OCI-LY7 (cell line): ENCODE measurements at regions of chr3 and their contacts with region 1.

Region 1: GRCh38 chr3:33047842-33048834 is 48.8 kb downstream of the GLB1 start:
- DNase-seq: peak; percentile 87
- H3K4me3 ChIP-seq: peak overlapping the region; percentile 48
- H3K27ac ChIP-seq: peak overlapping the region; percentile 90
- H3K4me1 ChIP-seq: peaks cover 88% of the 10 kb centered on the region
- CTCF ChIP-seq: no peak

Region 2: DNA sequence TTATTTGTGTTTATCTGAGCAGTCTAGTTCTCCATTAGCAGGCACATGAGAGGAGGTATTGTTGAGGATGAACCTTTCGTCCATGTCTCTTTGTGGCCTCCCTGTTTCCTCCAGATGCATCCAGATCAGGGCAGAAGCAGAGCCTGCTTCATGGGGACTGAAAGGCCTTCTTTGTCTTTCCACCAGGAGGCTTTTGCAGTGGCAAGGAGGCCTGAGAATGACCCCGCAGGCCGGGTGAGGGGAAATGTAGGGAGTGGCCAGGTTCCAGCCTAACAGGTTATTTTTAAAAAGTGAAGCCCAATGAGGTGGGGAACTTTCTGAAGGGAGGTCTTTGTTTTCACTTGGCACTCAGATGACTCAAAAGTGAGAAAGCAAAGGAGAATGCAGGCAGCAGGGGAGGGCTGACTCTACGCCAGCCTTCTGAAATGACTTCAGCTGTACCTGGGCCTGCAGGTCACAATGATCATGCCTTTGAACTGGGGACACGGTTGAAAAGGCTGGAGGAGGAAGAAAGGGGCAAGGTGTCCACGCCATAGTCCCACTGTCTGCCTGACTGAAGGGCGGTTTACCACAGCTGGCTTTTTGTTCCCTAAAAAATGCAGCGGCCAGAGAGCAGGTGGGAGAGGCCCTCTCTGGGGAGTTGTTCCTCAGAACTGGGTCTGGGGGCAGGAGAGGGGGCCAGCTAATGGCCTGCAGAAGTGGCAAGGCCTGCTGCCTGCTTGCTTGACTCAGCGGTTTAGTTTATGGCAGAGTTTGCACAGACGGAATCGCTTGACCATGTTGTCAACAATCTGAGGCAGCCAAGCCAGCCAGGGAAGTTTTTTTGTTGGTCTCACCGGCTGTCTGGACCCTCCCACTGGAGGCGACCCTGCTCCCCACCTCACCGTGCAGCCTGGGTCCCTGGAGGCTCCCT is 627.8 kb before region 1 on chr3:
- CTCF ChIA-PET with region 1: no interaction called
- POLR2A ChIA-PET with region 1: no interaction called
- intact Hi-C with region 1: loop called (anchors 5 kb)
- DNase-seq: peak; percentile 74
- H3K4me3 ChIP-seq: peak overlapping the region; percentile 47
- H3K27ac ChIP-seq: peak overlapping the region; percentile 90
- H3K4me1 ChIP-seq: peaks cover 78% of the 10 kb centered on the region
- CTCF ChIP-seq: no peak

Region 3: GRCh38 chr3:32614956-32615355 is 433.2 kb before region 1 on chr3:
- CTCF ChIA-PET with region 1: no interaction called
- POLR2A ChIA-PET with region 1: no interaction called
- intact Hi-C with region 1: no loop called
- DNase-seq: no peak
- H3K4me3 ChIP-seq: no peak overlapping the region
- H3K27ac ChIP-seq: no peak overlapping the region
- H3K4me1 ChIP-seq: no peaks in the 10 kb centered on the region
- CTCF ChIP-seq: no peak

Region 4: DNA sequence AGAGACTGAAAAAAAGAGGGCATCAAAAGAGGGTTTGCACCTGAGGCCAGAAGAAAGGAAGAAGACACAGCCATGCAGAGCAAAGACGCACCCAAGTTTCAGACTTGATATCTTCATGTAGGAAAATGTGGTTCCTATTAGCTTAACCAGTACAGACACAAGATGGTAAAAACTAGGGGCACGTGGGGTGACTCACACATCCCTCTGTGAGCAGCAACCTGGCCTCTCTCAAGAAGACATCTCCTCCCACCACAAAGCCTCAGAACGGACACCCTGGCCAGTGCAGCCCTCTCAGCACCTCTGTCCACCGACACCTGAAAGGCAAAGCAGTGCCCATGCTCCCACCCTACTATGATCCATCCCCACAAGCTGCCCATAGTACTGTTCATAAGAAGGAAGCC is 15.5 kb after region 1 on chr3:
- CTCF ChIA-PET with region 1: interaction called, 3 read pairs
- POLR2A ChIA-PET with region 1: interaction called, 34 read pairs
- intact Hi-C with region 1: loop called (anchors 2 kb)
- DNase-seq: peak; percentile 60
- H3K4me3 ChIP-seq: no peak overlapping the region
- H3K27ac ChIP-seq: peak overlapping the region; percentile 48
- H3K4me1 ChIP-seq: peaks cover 67% of the 10 kb centered on the region
- CTCF ChIP-seq: no peak

Region 5: DNA sequence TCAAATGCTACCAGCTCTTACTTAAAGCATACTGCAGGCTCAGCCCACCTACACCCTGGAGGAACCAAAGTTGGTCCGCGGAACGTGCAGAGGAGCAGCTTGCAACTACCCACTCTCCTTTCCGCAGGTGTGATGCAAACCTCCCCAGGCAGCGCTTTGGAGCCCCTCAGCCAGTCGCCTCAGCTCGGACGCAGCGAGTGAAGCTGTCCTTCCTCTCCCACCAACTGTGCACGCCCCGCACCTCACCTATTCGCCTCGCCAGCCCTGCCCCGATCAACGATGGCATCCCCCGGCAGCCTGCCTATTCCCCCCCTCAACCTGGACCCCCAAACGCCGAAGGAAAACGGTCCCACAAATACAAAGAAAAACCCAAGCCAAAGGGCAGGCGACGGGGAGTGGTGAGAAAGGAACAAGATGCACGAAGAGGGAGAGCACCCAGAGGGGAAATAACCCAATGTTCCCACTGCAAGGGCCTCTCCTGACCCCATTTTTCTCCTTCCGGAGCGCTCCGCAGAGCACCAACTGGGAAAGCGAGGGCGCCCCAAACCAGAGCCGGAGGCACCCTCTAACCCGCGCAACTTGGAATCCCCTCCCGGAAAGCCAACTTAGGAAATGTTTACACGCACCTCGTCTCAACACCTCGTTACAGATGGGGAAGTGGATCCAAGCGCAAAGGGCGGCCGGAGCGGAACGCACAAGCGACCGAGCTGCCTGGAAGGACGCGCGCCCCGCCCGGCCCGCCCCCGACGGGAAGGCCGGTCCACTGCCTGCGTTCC is 48.1 kb after region 1 on chr3:
- CTCF ChIA-PET with region 1: no interaction called
- POLR2A ChIA-PET with region 1: no interaction called
- intact Hi-C with region 1: loop called (anchors 2 kb)
- DNase-seq: peak; percentile 51
- H3K4me3 ChIP-seq: peak overlapping the region; percentile 84
- H3K27ac ChIP-seq: no peak overlapping the region
- H3K4me1 ChIP-seq: no peaks in the 10 kb centered on the region
- CTCF ChIP-seq: no peak

Region 6: GRCh38 chr3:33360136-33360825 is 312.1 kb after region 1 on chr3:
- CTCF ChIA-PET with region 1: no interaction called
- POLR2A ChIA-PET with region 1: no interaction called
- intact Hi-C with region 1: no loop called
- DNase-seq: no peak
- H3K4me3 ChIP-seq: no peak overlapping the region
- H3K27ac ChIP-seq: no peak overlapping the region
- H3K4me1 ChIP-seq: no peaks in the 10 kb centered on the region
- CTCF ChIP-seq: no peak

Region 7: DNA sequence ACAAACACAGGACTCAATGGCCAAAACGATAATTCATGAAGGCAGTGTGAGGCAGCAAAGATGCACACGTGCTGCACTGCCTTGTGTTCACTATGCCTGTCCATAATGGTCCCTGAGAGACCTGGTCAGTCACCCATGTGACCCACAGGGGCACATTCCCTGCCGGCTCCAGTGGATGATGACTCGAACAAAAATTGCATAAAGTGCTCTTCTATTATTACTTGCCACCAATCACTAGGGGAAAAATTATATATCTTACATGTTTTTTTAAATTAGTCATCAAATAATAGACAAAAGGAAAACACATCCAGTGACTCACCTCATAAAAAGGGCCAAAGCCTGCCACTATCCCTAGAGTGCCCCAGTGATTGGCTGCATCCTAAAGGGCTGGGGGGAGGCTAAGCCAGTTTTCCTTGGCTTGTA is 344.6 kb after region 1 on chr3:
- CTCF ChIA-PET with region 1: no interaction called
- POLR2A ChIA-PET with region 1: no interaction called
- intact Hi-C with region 1: no loop called
- DNase-seq: no peak
- H3K4me3 ChIP-seq: no peak overlapping the region
- H3K27ac ChIP-seq: no peak overlapping the region
- H3K4me1 ChIP-seq: no peaks in the 10 kb centered on the region
- CTCF ChIP-seq: no peak

Region 8: DNA sequence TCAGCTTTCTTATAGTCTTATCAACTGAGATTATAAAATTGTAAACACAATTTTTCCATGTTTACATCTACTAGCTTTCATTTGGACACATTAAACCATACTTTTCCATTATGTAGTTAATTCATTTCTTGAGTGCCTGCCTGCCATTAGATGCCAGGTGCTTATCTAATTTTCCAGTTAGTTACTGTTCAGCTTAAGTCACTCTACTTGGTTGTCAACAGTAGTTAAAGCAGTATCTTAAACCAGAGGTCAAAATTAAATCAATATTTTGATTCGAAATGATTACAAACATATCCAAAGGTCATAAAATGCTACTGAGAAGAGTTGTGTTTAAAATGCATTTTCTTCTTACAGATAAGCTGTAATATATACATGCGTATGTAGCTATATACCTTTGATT is 448.3 kb after region 1 on chr3:
- CTCF ChIA-PET with region 1: no interaction called
- POLR2A ChIA-PET with region 1: no interaction called
- intact Hi-C with region 1: no loop called
- DNase-seq: no peak
- H3K4me3 ChIP-seq: no peak overlapping the region
- H3K27ac ChIP-seq: no peak overlapping the region
- H3K4me1 ChIP-seq: no peaks in the 10 kb centered on the region
- CTCF ChIP-seq: no peak